ENCODE measurements at regions of chr17 and their contacts with region 1.

Region 1: GRCh38 chr17:67942810-67943209 is 53.5 kb downstream of the C17orf58 start:
- DNase-seq: peak; percentile 44
- H3K4me3 ChIP-seq: no peak overlapping the region
- H3K27ac ChIP-seq: no peak overlapping the region
- H3K4me1 ChIP-seq: no peaks in the 10 kb centered on the region
- H3K27me3 ChIP-seq: no peaks in the 10 kb centered on the region
- CTCF ChIP-seq: peak; percentile 39 to 58
- POLR2A ChIP-seq: no peak

Region 2: GRCh38 chr17:67959288-67959900 is 16.6 kb after region 1 on chr17:
- CTCF ChIA-PET with region 1: interaction called, 11 read pairs
- POLR2A ChIA-PET with region 1: no interaction called
- dilution Hi-C with region 1: no loop called
- intact Hi-C with region 1: no loop called
- DNase-seq: no peak
- H3K4me3 ChIP-seq: no peak overlapping the region
- H3K27ac ChIP-seq: no peak overlapping the region
- H3K4me1 ChIP-seq: peaks cover 2% of the 10 kb centered on the region
- H3K27me3 ChIP-seq: no peaks in the 10 kb centered on the region
- CTCF ChIP-seq: no peak
- POLR2A ChIP-seq: no peak

Measured in endothelial cell of umbilical vein (primary cell).